ENCODE measurements at regions of chr5 and their contacts with region 1.

Region 1: DNA sequence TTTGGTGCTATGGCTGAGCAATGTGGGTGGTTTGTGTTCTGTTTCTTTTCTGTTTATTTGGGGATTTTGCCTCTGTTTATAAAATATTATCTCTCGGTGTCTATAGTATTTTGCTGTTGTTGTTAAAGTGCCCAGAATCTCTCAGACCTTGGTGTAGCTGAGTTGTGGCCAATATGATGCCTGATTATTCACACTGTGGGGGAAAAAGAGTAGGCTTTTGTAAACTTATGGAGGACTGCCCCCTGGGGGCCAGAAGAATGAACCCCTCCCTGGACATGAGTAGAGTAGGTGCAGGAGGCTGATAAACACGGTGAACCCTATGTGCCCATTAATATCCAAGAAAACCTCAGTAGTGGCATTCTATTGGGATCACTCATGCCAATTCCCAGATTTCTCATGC is 49.0 kb upstream of the DPYSL3 start:
- DNase-seq: no peak
- H3K4me3 ChIP-seq: no peak overlapping the region
- H3K27ac ChIP-seq: no peak overlapping the region
- H3K4me1 ChIP-seq: peaks cover 0 to 7% of the 10 kb centered on the region in 2 donors
- H3K27me3 ChIP-seq: no peaks in the 10 kb centered on the region
- CTCF ChIP-seq: peak in 2 of 3 donors; percentile 38 to 52
- POLR2A ChIP-seq: no peak

Region 2: DNA sequence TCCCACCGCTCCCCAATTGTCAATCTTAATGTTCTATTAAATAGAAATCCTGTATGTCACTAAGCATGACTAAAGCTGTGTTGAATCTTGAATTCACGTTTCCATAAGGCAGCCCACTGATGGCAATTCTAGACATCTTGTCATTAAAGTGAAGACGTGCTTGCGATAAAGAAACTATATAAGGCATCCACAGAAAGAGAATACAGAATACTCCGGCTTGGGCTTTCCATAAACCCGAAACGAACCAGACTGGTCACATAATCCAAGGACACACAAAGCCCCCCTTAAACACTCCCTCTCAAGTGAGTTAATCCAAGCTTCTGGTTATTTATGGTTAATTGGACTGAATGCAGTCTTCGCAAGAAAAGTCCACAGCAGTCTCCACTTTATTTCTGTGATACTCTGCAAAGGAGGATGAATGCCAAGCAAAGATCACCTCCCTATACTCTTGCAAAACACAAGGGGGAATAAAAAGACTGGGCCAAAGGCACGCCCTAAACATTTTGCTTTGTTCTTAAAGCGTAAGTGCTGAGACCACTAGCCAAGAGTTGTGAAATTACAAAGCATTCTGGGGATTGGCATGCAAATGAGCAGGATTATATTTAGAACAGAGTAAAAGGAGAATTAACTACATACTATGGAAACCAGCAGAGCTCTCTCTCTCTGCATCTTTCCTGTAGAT is 103.7 kb before region 1 on chr5:
- intact Hi-C with region 1: loop called (anchors 5 kb)
- DNase-seq: no peak
- H3K4me3 ChIP-seq: peak overlapping the region; percentile 74 to 93 (median 89)
- H3K27ac ChIP-seq: peak overlapping the region; percentile 82 to 94
- H3K4me1 ChIP-seq: peaks cover 0 to 2% of the 10 kb centered on the region in 2 donors
- H3K27me3 ChIP-seq: no peaks in the 10 kb centered on the region
- CTCF ChIP-seq: no peak
- POLR2A ChIP-seq: no peak

Region 3: GRCh38 chr5:147576646-147577535 is 18.1 kb after region 1 on chr5:
- intact Hi-C with region 1: no loop called
- DNase-seq: peak; percentile 32 to 68
- H3K4me3 ChIP-seq: no peak overlapping the region
- H3K27ac ChIP-seq: no peak overlapping the region
- H3K4me1 ChIP-seq: no peaks in the 10 kb centered on the region
- H3K27me3 ChIP-seq: no peaks in the 10 kb centered on the region
- CTCF ChIP-seq: peak; percentile 70 to 82 (median 76)
- POLR2A ChIP-seq: no peak

Region 4: GRCh38 chr5:148060309-148060708 is 501.5 kb after region 1 on chr5:
- intact Hi-C with region 1: no loop called
- DNase-seq: no peak
- H3K4me3 ChIP-seq: no peak overlapping the region
- H3K27ac ChIP-seq: no peak overlapping the region
- H3K4me1 ChIP-seq: no peaks in the 10 kb centered on the region
- H3K27me3 ChIP-seq: no peaks in the 10 kb centered on the region
- CTCF ChIP-seq: no peak
- POLR2A ChIP-seq: no peak